Mammary epithelial cell (primary cell): ENCODE measurements at regions of chr2 and their contacts with region 1.

Region 1: GRCh38 chr2:207166039-207166348 is 246 bp upstream of the KLF7 start:
- DNase-seq: peak; percentile 100
- H3K4me3 ChIP-seq: peak overlapping the region; percentile 55 to 71 (median 62)
- H3K27ac ChIP-seq: peak overlapping the region; percentile 93
- H3K4me1 ChIP-seq: peaks cover 24% of the 10 kb centered on the region
- H3K27me3 ChIP-seq: no peaks in the 10 kb centered on the region
- CTCF ChIP-seq: no peak

Region 2: GRCh38 chr2:206693399-206694137 is 472.4 kb before region 1 on chr2:
- CTCF ChIA-PET with region 1: no interaction called
- dilution Hi-C with region 1: no loop called
- in situ Hi-C with region 1: no loop called
- intact Hi-C with region 1: loop called (anchors 10 kb)
- DNase-seq: peak; percentile 55
- H3K4me3 ChIP-seq: no peak overlapping the region
- H3K27ac ChIP-seq: no peak overlapping the region
- H3K4me1 ChIP-seq: no peaks in the 10 kb centered on the region
- H3K27me3 ChIP-seq: no peaks in the 10 kb centered on the region
- CTCF ChIP-seq: peak; percentile 66 to 68

Region 3: GRCh38 chr2:206823178-206823577 is 342.8 kb before region 1 on chr2:
- CTCF ChIA-PET with region 1: no interaction called
- dilution Hi-C with region 1: no loop called
- in situ Hi-C with region 1: no loop called
- intact Hi-C with region 1: no loop called
- DNase-seq: no peak
- H3K4me3 ChIP-seq: no peak overlapping the region
- H3K27ac ChIP-seq: no peak overlapping the region
- H3K4me1 ChIP-seq: no peaks in the 10 kb centered on the region
- H3K27me3 ChIP-seq: no peaks in the 10 kb centered on the region
- CTCF ChIP-seq: no peak

Region 4: DNA sequence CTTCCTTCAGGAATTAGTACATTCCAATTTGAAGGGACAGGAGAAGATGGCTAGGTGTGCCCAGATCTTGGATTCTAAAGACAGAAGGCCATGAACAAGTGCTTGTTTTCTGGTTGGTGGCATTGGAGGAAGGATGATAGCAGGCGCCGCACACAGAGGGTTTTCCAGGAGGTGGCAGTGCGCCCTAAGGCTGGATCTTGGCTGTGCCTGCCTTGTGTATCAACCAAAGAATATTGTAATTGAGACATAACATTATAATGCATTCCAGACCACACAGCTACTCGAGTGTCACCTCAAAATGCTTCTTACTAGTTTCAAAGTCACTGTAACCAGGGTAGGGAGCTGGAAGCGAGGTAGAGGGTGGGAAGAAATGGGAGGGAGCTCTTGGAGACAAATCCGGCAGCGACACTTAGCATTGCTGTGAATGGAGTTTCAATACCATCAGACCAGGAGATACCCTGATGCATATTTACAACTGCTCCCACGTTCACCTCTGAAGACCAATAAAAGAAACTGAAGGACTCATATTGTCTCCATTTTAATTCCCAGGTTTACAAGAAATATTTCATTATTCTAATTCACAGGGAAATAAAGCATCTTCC is 184.2 kb before region 1 on chr2:
- CTCF ChIA-PET with region 1: no interaction called
- dilution Hi-C with region 1: no loop called
- in situ Hi-C with region 1: no loop called
- intact Hi-C with region 1: loop called (anchors 1 kb)
- DNase-seq: peak; percentile 64
- H3K4me3 ChIP-seq: no peak overlapping the region
- H3K27ac ChIP-seq: no peak overlapping the region
- H3K4me1 ChIP-seq: peaks cover 21% of the 10 kb centered on the region
- H3K27me3 ChIP-seq: no peaks in the 10 kb centered on the region
- CTCF ChIP-seq: peak; percentile 90 to 92

Region 5: DNA sequence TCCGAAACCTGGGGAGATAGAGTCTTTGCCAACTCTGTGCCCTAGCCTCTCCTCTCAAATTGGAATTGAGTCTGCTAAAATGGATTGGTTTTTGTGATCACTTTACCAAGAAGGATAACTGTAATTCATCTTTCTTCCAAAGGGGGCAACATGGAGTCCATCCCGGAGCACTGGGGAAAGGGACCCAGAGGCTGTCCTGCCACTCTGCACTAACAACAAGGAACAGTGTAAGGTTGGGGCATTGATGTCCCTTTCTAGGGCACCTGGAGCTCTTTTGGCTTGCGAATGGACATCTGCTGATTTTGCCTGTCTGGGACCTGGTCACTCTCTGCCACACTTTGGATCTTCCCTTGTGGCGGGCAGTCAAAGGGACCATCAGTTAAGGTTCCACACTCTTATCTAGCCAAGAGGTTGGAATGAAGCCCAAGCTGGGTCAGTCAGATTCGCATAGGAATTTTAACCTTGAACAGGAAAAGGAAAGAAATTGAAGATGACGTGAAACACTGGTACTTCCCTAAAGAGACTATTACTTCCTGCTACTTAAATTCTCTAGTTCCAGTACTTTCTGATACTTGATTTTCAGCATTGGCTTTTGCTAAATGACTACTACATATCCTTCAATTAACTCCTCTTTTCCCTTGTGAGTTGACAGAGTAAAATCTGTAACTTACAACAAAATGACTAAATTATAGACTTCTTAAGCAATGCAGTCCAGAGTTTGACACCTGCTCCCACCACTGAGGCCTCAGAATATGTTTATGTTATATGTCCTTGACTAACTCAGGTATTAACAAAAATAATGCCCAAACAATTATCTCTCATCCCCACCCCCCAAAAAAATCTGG is 64.5 kb after region 1 on chr2:
- CTCF ChIA-PET with region 1: no interaction called
- dilution Hi-C with region 1: loop called (anchors 5 kb)
- in situ Hi-C with region 1: loop called in 1 of 2 experiments (anchors 10 kb)
- intact Hi-C with region 1: no loop called
- DNase-seq: no peak
- H3K4me3 ChIP-seq: no peak overlapping the region
- H3K27ac ChIP-seq: no peak overlapping the region
- H3K4me1 ChIP-seq: peaks cover 20% of the 10 kb centered on the region
- H3K27me3 ChIP-seq: no peaks in the 10 kb centered on the region
- CTCF ChIP-seq: peak; percentile 48 to 57

Region 6: GRCh38 chr2:207254591-207255464 is 88.8 kb after region 1 on chr2:
- CTCF ChIA-PET with region 1: no interaction called
- dilution Hi-C with region 1: no loop called
- in situ Hi-C with region 1: no loop called
- intact Hi-C with region 1: loop called (anchors 1 kb)
- DNase-seq: peak; percentile 54
- H3K4me3 ChIP-seq: peak overlapping the region in 2 of 3 experiments; percentile 8 to 15
- H3K27ac ChIP-seq: peak overlapping the region; percentile 86
- H3K4me1 ChIP-seq: peaks cover 90% of the 10 kb centered on the region
- H3K27me3 ChIP-seq: no peaks in the 10 kb centered on the region
- CTCF ChIP-seq: no peak

Region 7: DNA sequence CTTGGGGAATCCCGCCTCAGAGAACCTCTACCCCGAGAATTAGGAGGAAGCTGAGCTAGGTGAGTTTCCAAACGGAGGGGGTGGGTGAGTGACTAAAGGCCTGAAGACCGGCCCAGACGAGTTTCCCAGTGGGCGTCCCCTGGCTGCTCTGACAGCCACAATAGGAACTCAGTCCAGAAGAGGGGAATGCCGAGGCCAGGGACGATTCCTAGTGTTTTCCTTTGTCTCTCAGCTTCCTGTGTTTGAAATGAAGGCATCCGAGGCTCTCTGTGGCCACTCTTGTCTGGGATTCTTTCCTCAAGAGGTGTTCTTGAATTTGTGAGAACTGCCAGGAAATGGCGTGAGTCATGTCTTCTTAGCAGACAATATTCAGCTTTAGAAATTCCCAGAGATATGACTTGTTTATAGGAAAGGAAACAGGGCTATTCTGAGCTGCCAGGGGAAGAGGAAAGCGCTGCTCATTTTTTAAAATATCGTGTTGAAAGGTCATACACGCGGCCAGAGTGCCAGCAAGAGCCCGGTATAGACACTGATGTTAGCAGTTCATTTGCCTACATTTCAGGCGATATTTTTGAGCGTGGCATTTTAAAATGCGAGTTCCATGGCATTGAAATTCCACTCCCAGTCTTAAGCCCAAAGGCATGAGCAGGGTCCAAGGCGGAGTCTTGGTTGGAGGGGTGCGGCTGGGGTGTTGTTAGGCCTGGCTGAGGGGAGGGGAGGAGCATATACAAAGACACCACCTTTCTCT is 168.8 kb after region 1 on chr2:
- CTCF ChIA-PET with region 1: no interaction called
- dilution Hi-C with region 1: no loop called
- in situ Hi-C with region 1: loop called in 1 of 2 experiments (anchors 10 kb)
- intact Hi-C with region 1: loop called (anchors 1 kb)
- DNase-seq: peak; percentile 99
- H3K4me3 ChIP-seq: peak overlapping the region; percentile 3 to 26 (median 20)
- H3K27ac ChIP-seq: peak overlapping the region; percentile 99
- H3K4me1 ChIP-seq: peaks cover 87% of the 10 kb centered on the region
- H3K27me3 ChIP-seq: no peaks in the 10 kb centered on the region
- CTCF ChIP-seq: no peak

Region 8: GRCh38 chr2:207408086-207408794 is 242.2 kb after region 1 on chr2:
- CTCF ChIA-PET with region 1: no interaction called
- dilution Hi-C with region 1: no loop called
- in situ Hi-C with region 1: no loop called
- intact Hi-C with region 1: no loop called
- DNase-seq: peak; percentile 88
- H3K4me3 ChIP-seq: no peak overlapping the region
- H3K27ac ChIP-seq: peak overlapping the region; percentile 64
- H3K4me1 ChIP-seq: peaks cover 28% of the 10 kb centered on the region
- H3K27me3 ChIP-seq: no peaks in the 10 kb centered on the region
- CTCF ChIP-seq: no peak